CD4-positive, alpha-beta memory T cell (primary cell): ENCODE measurements at regions of chr19 and their contacts with region 1.

Region 1: GRCh38 chr19:8252922-8253589 is 43.9 kb downstream of the CERS4 start:
- DNase-seq: peak; percentile 75 to 82 (median 78)
- H3K4me3 ChIP-seq: no peak overlapping the region
- H3K4me3 Mint-ChIP-seq: no peak overlapping the region
- H3K27ac ChIP-seq: no peak overlapping the region
- H3K27ac Mint-ChIP-seq: peak overlapping the region in 1 of 7 donors; percentile 77
- H3K4me1 ChIP-seq: peaks cover 7% of the 10 kb centered on the region
- H3K4me1 Mint-ChIP-seq: peaks cover 5 to 7% (median 6%) of the 10 kb centered on the region in 4 donors
- H3K27me3 ChIP-seq: no peaks in the 10 kb centered on the region
- H3K27me3 Mint-ChIP-seq: no peaks in the 10 kb centered on the region

Region 2: GRCh38 chr19:8005534-8006256 is 247.4 kb before region 1 on chr19 and contains the start of gene ELAVL1:
- CTCF ChIA-PET with region 1: interaction called, 3 read pairs
- POLR2A ChIA-PET with region 1: no interaction called
- intact Hi-C with region 1: loop called (anchors 5 kb)
- DNase-seq: peak; percentile 86 to 91 (median 88)
- H3K4me3 ChIP-seq: peak within 1 kb of the TSS; percentile 39 to 77
- H3K4me3 Mint-ChIP-seq: peak within 1 kb of the TSS; percentile 89 to 97 (median 91)
- H3K27ac ChIP-seq: peak within 1 kb of the TSS; percentile 70
- H3K27ac Mint-ChIP-seq: peak within 1 kb of the TSS; percentile 85 to 97 (median 93)
- H3K4me1 ChIP-seq: peaks cover 42% of the 10 kb centered on the region
- H3K4me1 Mint-ChIP-seq: peaks cover 33 to 39% (median 37%) of the 10 kb centered on the region in 4 donors
- H3K27me3 ChIP-seq: no peaks in the 10 kb centered on the region
- H3K27me3 Mint-ChIP-seq: no peaks in the 10 kb centered on the region
- total RNA-seq, gene ELAVL1: 54.2 to 54.7 TPM

Region 3: GRCh38 chr19:8158411-8159074 is 94.5 kb before region 1 on chr19:
- CTCF ChIA-PET with region 1: interaction called, 26 read pairs
- POLR2A ChIA-PET with region 1: no interaction called
- intact Hi-C with region 1: loop called (anchors 1 kb)
- DNase-seq: peak; percentile 57 to 70 (median 67)
- H3K4me3 ChIP-seq: no peak overlapping the region
- H3K4me3 Mint-ChIP-seq: no peak overlapping the region
- H3K27ac ChIP-seq: no peak overlapping the region
- H3K27ac Mint-ChIP-seq: peak overlapping the region in 1 of 7 donors; percentile 87
- H3K4me1 ChIP-seq: no peaks in the 10 kb centered on the region
- H3K4me1 Mint-ChIP-seq: peaks cover 4 to 6% (median 4%) of the 10 kb centered on the region in 4 donors
- H3K27me3 ChIP-seq: no peaks in the 10 kb centered on the region
- H3K27me3 Mint-ChIP-seq: peaks cover 11 to 12% of the 10 kb centered on the region in 2 donors

Region 4: DNA sequence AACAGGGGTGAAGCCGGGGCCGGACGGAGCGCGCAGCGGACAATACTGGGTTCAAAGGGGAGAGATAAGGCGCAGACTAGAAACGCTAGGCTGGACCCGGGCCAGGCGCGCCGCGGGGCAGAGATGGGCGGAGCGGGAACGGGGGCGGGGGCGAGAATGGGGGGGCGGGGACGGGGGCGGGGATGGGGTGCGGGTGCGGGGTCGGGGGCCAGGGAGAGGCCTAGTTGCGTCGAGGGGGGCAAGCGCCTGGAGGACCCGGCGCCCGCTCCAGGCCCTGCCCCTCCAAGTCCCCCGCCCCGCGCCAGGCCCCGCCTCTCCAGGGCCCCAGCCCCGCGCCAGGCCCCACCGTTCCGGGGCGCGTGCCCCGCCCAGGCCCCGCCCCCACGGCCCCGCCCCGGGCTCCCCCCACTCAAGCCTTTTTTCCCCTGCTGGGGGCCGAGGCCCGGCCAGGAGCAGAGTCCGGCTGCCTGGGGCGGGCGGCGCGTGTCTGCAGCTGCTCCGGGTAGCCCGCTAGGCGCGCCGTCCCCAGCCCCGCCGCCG is 44.1 kb before region 1 on chr19 and contains the start of gene CERS4:
- CTCF ChIA-PET with region 1: no interaction called
- POLR2A ChIA-PET with region 1: interaction called, 3 read pairs
- intact Hi-C with region 1: loop called (anchors 2 kb)
- DNase-seq: peak in 3 of 5 donors; percentile 76 to 78 (median 78)
- H3K4me3 ChIP-seq: peak within 1 kb of the TSS; percentile 63 to 79
- H3K4me3 Mint-ChIP-seq: peak within 1 kb of the TSS; percentile 82 to 92 (median 92)
- H3K27ac ChIP-seq: peak within 1 kb of the TSS; percentile 84
- H3K27ac Mint-ChIP-seq: peak within 1 kb of the TSS; percentile 85 to 96 (median 93)
- H3K4me1 ChIP-seq: peaks cover 19% of the 10 kb centered on the region
- H3K4me1 Mint-ChIP-seq: peaks cover 12 to 29% (median 22%) of the 10 kb centered on the region in 4 donors
- H3K27me3 ChIP-seq: no peaks in the 10 kb centered on the region
- H3K27me3 Mint-ChIP-seq: no peaks in the 10 kb centered on the region
- total RNA-seq, gene CERS4: 29.2 to 30.6 TPM

Region 5: GRCh38 chr19:8220481-8220880 is 32.6 kb before region 1 on chr19:
- CTCF ChIA-PET with region 1: no interaction called
- POLR2A ChIA-PET with region 1: no interaction called
- intact Hi-C with region 1: no loop called
- DNase-seq: no peak
- H3K4me3 ChIP-seq: no peak overlapping the region
- H3K4me3 Mint-ChIP-seq: no peak overlapping the region
- H3K27ac ChIP-seq: no peak overlapping the region
- H3K27ac Mint-ChIP-seq: peak overlapping the region in 1 of 7 donors; percentile 35
- H3K4me1 ChIP-seq: no peaks in the 10 kb centered on the region
- H3K4me1 Mint-ChIP-seq: peaks cover 0 to 7% (median 2%) of the 10 kb centered on the region in 4 donors
- H3K27me3 ChIP-seq: no peaks in the 10 kb centered on the region
- H3K27me3 Mint-ChIP-seq: no peaks in the 10 kb centered on the region